GM23248 (cell line): ENCODE measurements at regions of chr3 and their contacts with region 1.

Region 1: DNA sequence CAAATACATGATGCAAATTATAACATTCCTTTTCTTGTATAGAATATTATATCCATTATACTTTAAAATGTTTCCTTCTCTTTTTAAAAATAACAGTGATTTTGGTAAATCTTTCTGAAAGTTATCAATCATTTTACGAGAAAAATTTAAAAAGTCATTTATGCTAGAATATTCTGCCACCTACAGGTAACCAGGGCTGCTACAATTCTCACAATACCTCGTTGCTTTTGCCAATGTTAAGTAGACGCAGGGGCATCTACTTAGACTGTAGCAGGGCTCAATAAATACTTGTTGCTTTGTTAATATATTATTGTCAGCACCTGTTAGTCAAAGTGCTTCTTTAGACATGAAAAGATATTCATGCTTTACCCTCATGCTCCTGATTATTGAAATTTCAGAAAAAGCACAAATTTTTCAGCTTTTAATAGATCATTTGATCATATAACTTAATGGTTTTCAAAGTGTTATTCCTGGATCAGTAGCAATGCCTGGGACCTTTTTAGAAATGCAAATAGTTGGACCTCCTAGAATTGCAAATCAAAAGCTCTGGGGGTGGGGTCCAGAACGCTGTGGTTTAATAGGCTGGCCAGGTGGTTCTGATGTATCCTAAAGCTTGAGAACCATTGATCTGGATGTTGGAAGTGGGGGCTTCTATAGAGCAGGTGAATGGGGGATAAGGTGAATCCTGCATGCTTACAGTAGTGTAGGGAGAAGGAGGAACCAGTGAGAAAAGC is 223.6 kb upstream of the PDZRN3 start:
- DNase-seq: peak; percentile 72
- H3K4me3 ChIP-seq: no peak overlapping the region
- H3K27ac ChIP-seq: no peak overlapping the region
- H3K4me1 ChIP-seq: no peaks in the 10 kb centered on the region
- H3K27me3 ChIP-seq: no peaks in the 10 kb centered on the region

Region 2: GRCh38 chr3:73502609-73503583 is 345.4 kb before region 1 on chr3:
- in situ Hi-C with region 1: loop called (anchors 10 kb)
- DNase-seq: peak; percentile 88
- H3K4me3 ChIP-seq: 0 out of 2 replicates have a peak overlapping the region, but pooled peaks have one; percentile 19
- H3K27ac ChIP-seq: peak overlapping the region; percentile 67
- H3K4me1 ChIP-seq: peaks cover 40% of the 10 kb centered on the region
- H3K27me3 ChIP-seq: no peaks in the 10 kb centered on the region

Region 3: DNA sequence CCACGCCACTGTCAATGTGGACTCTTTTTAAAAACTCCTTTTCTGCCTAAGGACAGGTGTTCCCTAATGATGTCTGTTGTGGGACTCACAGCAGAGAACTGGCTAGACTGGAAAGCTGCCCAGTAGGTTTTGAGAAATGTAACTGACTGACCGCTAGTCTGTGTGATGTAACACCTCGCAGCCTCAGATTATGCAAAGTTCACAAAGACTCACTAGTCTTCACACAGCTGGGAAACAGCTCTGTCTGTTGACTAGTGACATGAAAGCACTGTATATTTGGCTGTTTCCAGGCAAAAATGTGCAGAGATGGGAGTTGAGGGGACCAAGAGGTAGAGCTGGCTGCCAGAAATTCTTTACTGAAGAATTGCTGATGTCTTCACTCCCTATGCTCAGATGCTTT is 233.9 kb before region 1 on chr3:
- in situ Hi-C with region 1: loop called (anchors 10 kb)
- DNase-seq: peak; percentile 94
- H3K4me3 ChIP-seq: no peak overlapping the region
- H3K27ac ChIP-seq: peak overlapping the region; percentile 80
- H3K4me1 ChIP-seq: peaks cover 52% of the 10 kb centered on the region
- H3K27me3 ChIP-seq: no peaks in the 10 kb centered on the region